Naive thymus-derived CD4-positive, alpha-beta T cell (primary cell): ENCODE measurements at regions of chr5 and their contacts with region 1.

Region 1: GRCh38 chr5:35651002-35651756 is 33.5 kb downstream of the SPEF2 start:
- DNase-seq: peak; percentile 10 to 71 (median 64)
- ATAC-seq: peak; percentile 82
- H3K4me3 ChIP-seq: no peak overlapping the region
- H3K4me3 Mint-ChIP-seq: no peak overlapping the region
- H3K27ac ChIP-seq: no peak overlapping the region
- H3K27ac Mint-ChIP-seq: peak overlapping the region in 5 of 9 donors; percentile 2 to 74 (median 42)
- H3K4me1 ChIP-seq: peaks cover 0 to 6% of the 10 kb centered on the region in 2 donors
- H3K4me1 Mint-ChIP-seq: peaks cover 0 to 16% (median 11%) of the 10 kb centered on the region in 7 donors
- H3K27me3 ChIP-seq: no peaks in the 10 kb centered on the region
- H3K27me3 Mint-ChIP-seq: no peaks in the 10 kb centered on the region

Region 2: GRCh38 chr5:35089334-35090314 is 561.6 kb before region 1 on chr5:
- CTCF ChIA-PET with region 1: interaction called, 3 read pairs
- POLR2A ChIA-PET with region 1: no interaction called
- intact Hi-C with region 1: loop called (anchors 1 to 5 kb)
- DNase-seq: peak; percentile 15 to 55 (median 37)
- ATAC-seq: peak; percentile 56
- H3K4me3 ChIP-seq: no peak overlapping the region
- H3K4me3 Mint-ChIP-seq: no peak overlapping the region
- H3K27ac ChIP-seq: no peak overlapping the region
- H3K27ac Mint-ChIP-seq: no peak overlapping the region
- H3K4me1 ChIP-seq: no peaks in the 10 kb centered on the region
- H3K4me1 Mint-ChIP-seq: peaks cover 0 to 3% (median 0%) of the 10 kb centered on the region in 7 donors
- H3K27me3 ChIP-seq: no peaks in the 10 kb centered on the region
- H3K27me3 Mint-ChIP-seq: peaks cover 0 to 7% (median 6%) of the 10 kb centered on the region in 5 donors

Region 3: GRCh38 chr5:35617435-35618303 is 33.5 kb before region 1 on chr5 and contains the start of gene SPEF2:
- CTCF ChIA-PET with region 1: interaction called, 4 read pairs
- POLR2A ChIA-PET with region 1: no interaction called
- intact Hi-C with region 1: loop called (anchors 1 kb)
- DNase-seq: peak; percentile 57 to 76 (median 71)
- ATAC-seq: peak; percentile 95
- H3K4me3 ChIP-seq: peak within 1 kb of the TSS; percentile 95
- H3K4me3 Mint-ChIP-seq: peak within 1 kb of the TSS; percentile 91 to 96 (median 94)
- H3K27ac ChIP-seq: peak within 1 kb of the TSS; percentile 27
- H3K27ac Mint-ChIP-seq: peak within 1 kb of the TSS; percentile 79 to 96 (median 89)
- H3K4me1 ChIP-seq: peaks cover 4 to 12% of the 10 kb centered on the region in 2 donors
- H3K4me1 Mint-ChIP-seq: peaks cover 14 to 34% (median 26%) of the 10 kb centered on the region in 7 donors
- H3K27me3 ChIP-seq: no peaks in the 10 kb centered on the region
- H3K27me3 Mint-ChIP-seq: no peaks in the 10 kb centered on the region
- total RNA-seq, gene SPEF2: 7.1 to 13.5 (median 9.9) TPM

Region 4: GRCh38 chr5:35857606-35858205 is 206.5 kb after region 1 on chr5:
- CTCF ChIA-PET with region 1: interaction called, 11 read pairs
- POLR2A ChIA-PET with region 1: interaction called, 4 read pairs
- intact Hi-C with region 1: loop called (anchors 1 to 2 kb)
- DNase-seq: peak in 1 of 9 donors; percentile 41
- ATAC-seq: no peak
- H3K4me3 ChIP-seq: peak overlapping the region; percentile 80
- H3K4me3 Mint-ChIP-seq: peak overlapping the region; percentile 82 to 100 (median 94)
- H3K27ac ChIP-seq: peak overlapping the region; percentile 98
- H3K27ac Mint-ChIP-seq: peak overlapping the region; percentile 96 to 100 (median 99)
- H3K4me1 ChIP-seq: peaks cover 40 to 50% of the 10 kb centered on the region in 2 donors
- H3K4me1 Mint-ChIP-seq: peaks cover 25 to 73% (median 63%) of the 10 kb centered on the region in 7 donors
- H3K27me3 ChIP-seq: no peaks in the 10 kb centered on the region
- H3K27me3 Mint-ChIP-seq: no peaks in the 10 kb centered on the region

Region 5: DNA sequence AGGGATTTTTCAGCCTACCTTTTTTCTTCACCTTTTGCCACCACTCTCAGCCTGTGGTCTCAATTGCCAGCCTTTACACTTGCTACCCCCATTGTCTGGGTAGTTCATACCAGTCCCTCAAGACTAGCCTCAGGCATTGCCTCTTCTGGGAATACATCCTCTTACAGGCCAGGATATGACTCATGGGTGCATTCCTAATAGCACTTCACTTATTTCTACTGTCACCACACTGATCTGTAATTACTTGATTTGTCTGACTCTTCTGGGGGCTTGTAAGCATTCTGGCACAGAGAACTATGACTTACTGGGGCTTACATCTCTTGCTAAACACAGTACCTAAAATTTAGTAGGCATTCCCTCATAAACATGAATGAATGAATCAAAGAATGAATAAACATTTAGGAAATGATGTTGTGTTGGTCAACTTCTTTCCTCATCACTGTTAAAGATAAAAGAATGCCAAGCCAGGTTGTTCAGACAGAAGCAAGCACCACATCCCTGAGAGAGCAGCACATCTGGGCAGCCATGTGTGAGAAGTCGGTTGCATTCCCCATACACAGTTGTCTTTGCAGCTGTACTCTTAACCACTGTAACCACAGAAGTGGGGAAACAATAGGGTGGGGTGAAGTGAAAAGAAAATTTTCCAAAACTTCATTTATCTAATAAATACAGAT is 233.1 kb after region 1 on chr5:
- CTCF ChIA-PET with region 1: interaction called, 8 read pairs
- POLR2A ChIA-PET with region 1: interaction called, 11 read pairs
- intact Hi-C with region 1: no loop called
- DNase-seq: no peak
- ATAC-seq: peak; percentile 57
- H3K4me3 ChIP-seq: no peak overlapping the region
- H3K4me3 Mint-ChIP-seq: peak overlapping the region in 8 of 10 donors; percentile 2 to 62 (median 18)
- H3K27ac ChIP-seq: no peak overlapping the region
- H3K27ac Mint-ChIP-seq: peak overlapping the region in 8 of 9 donors; percentile 5 to 90 (median 68)
- H3K4me1 ChIP-seq: peaks cover 10 to 25% of the 10 kb centered on the region in 2 donors
- H3K4me1 Mint-ChIP-seq: peaks cover 37 to 56% (median 51%) of the 10 kb centered on the region in 7 donors
- H3K27me3 ChIP-seq: no peaks in the 10 kb centered on the region
- H3K27me3 Mint-ChIP-seq: no peaks in the 10 kb centered on the region